Panc1 (cell line): ENCODE measurements at regions of chr2 and their contacts with region 1.

Region 1: GRCh38 chr2:30711646-30712085 is 95.6 kb downstream of the CAPN13 start:
- DNase-seq: peak; percentile 86
- ATAC-seq: peak; percentile 73
- H3K4me3 ChIP-seq: no peak overlapping the region
- H3K27ac ChIP-seq: no peak overlapping the region
- H3K4me1 ChIP-seq: no peaks in the 10 kb centered on the region
- H3K27me3 ChIP-seq: no peaks in the 10 kb centered on the region
- CTCF ChIP-seq: peak; percentile 99

Region 2: DNA sequence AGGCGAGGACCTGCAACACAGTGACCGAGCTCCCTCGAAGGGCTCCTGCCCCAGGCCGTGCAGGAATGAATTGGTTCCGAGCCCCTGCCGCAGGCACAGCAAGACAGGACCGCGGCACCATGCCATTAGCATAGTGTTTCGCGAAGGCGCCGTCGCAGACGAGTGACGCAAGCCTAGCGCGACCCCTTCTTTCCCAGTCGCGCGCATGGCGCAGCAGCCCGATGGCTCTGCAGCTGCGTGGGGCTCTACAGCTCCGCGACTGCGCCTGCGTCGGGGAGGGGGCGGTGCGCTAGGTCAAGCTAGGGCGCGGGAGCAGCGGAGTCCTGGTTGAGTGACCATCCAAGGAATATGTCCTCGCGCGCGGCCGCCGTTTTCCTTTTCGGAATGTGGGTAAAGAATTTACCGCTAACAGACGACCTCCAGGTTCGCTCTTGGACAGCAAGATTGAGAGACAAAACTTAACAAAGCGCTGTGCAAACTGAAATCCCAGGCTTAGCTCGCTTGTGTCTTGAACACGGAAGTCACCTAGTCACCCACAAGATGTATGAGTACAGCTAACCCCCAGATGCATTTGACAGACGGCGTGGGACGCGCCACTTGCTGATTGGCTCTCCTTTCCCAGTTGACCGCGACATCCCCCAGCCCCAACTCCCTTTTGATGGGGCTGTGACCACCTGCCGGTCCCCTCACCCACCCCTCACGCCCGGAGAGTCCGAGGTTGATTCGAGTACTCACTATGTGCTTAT is 1841.3 kb before region 1 on chr2 and contains the start of gene TRMT61B:
- CTCF ChIA-PET with region 1: no interaction called
- POLR2A ChIA-PET with region 1: no interaction called
- in situ Hi-C with region 1: no loop called
- intact Hi-C with region 1: no loop called
- DNase-seq: peak; percentile 90
- ATAC-seq: peak; percentile 99
- H3K4me3 ChIP-seq: peak within 1 kb of the TSS; percentile 85 to 95
- H3K27ac ChIP-seq: peak within 1 kb of the TSS; percentile 89
- H3K4me1 ChIP-seq: peaks cover 10% of the 10 kb centered on the region; the same call in 1 of the 2 replicates
- H3K27me3 ChIP-seq: peaks cover 2% of the 10 kb centered on the region; the same call in 1 of the 2 replicates
- CTCF ChIP-seq: no peak
- total RNA-seq, gene TRMT61B: 14.3 TPM

Region 3: DNA sequence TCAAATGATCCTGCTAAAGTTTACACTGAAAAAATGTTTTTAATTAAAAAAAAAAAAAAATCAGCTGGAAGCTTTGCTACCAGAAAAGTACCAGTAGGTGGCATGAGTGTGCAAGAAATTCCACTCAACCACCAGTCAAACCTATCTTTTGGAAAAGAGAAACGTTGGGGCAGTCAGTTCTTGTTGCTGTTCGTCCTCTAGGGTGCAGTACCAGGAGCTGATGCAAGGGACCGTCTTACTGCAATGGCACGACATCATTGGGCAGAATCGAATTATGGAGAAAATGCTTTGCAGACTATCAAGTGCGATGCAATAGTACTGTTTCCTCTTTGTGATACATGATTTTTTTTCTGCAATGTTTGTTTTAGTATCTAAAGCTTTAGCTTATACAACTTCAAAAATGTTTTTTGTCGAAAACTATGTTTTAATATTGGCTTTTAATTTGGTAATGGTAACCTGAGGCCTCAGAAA is 546.6 kb before region 1 on chr2:
- CTCF ChIA-PET with region 1: interaction called, 47 read pairs
- POLR2A ChIA-PET with region 1: interaction called, 3 read pairs
- in situ Hi-C with region 1: no loop called
- intact Hi-C with region 1: loop called (anchors 1 kb)
- DNase-seq: peak; percentile 69
- ATAC-seq: peak; percentile 99
- H3K4me3 ChIP-seq: no peak overlapping the region
- H3K27ac ChIP-seq: no peak overlapping the region
- H3K4me1 ChIP-seq: no peaks in the 10 kb centered on the region
- H3K27me3 ChIP-seq: no peaks in the 10 kb centered on the region
- CTCF ChIP-seq: peak; percentile 92

Region 4: DNA sequence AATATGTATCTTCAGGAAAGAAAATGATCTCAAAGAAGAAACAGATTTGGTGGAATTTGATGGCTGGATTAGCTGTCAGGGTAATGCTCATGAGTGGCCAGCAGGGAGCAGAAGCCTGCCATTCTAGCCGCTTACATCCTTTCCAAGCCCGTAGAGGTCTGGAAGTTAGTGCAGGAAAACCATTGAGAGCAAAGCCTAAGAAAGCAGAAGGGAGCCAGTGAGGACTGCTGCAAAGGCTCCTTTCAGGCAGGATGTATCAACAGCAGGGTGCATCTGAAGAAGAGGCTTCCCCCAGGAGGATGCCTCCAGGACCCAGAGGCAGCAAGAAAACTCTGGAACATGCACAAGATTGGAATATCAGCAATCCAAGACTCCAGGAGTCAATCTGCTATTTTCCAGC is 503.2 kb before region 1 on chr2:
- CTCF ChIA-PET with region 1: interaction called, 12 read pairs
- POLR2A ChIA-PET with region 1: no interaction called
- in situ Hi-C with region 1: no loop called
- intact Hi-C with region 1: loop called (anchors 1 kb)
- DNase-seq: peak; percentile 51
- ATAC-seq: peak; percentile 97
- H3K4me3 ChIP-seq: no peak overlapping the region
- H3K27ac ChIP-seq: no peak overlapping the region
- H3K4me1 ChIP-seq: no peaks in the 10 kb centered on the region
- H3K27me3 ChIP-seq: no peaks in the 10 kb centered on the region; the same call in 1 of the 2 replicates
- CTCF ChIP-seq: peak; percentile 88

Region 5: DNA sequence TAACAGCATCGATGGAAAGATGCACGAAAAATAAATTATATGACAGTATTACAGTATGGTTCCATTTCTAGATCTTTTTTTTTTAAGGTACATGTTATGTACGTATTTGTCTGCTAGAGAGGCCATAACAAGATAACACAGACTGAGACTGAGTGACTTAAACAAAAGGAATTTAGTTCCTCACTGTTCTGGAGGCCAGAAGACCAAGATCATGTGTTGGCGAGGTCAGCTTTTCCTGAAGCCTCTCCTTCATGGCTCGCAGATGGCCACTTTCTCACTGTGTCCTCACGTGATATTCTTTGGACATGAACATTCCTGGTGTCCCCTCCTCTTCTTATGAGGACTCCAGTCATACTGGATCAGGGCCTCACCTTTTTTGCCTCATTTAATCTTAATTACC is 81.8 kb before region 1 on chr2:
- CTCF ChIA-PET with region 1: no interaction called
- POLR2A ChIA-PET with region 1: no interaction called
- in situ Hi-C with region 1: no loop called
- intact Hi-C with region 1: no loop called
- DNase-seq: no peak
- ATAC-seq: no peak
- H3K4me3 ChIP-seq: no peak overlapping the region
- H3K27ac ChIP-seq: no peak overlapping the region
- H3K4me1 ChIP-seq: no peaks in the 10 kb centered on the region
- H3K27me3 ChIP-seq: no peaks in the 10 kb centered on the region
- CTCF ChIP-seq: no peak

Region 6: GRCh38 chr2:30736461-30737325 is 25.0 kb after region 1 on chr2:
- CTCF ChIA-PET with region 1: interaction called, 11 read pairs
- POLR2A ChIA-PET with region 1: no interaction called
- in situ Hi-C with region 1: no loop called
- intact Hi-C with region 1: no loop called
- DNase-seq: no peak
- ATAC-seq: no peak
- H3K4me3 ChIP-seq: no peak overlapping the region
- H3K27ac ChIP-seq: no peak overlapping the region
- H3K4me1 ChIP-seq: no peaks in the 10 kb centered on the region
- H3K27me3 ChIP-seq: peaks cover 2% of the 10 kb centered on the region; the same call in 1 of the 2 replicates
- CTCF ChIP-seq: no peak

Region 7: DNA sequence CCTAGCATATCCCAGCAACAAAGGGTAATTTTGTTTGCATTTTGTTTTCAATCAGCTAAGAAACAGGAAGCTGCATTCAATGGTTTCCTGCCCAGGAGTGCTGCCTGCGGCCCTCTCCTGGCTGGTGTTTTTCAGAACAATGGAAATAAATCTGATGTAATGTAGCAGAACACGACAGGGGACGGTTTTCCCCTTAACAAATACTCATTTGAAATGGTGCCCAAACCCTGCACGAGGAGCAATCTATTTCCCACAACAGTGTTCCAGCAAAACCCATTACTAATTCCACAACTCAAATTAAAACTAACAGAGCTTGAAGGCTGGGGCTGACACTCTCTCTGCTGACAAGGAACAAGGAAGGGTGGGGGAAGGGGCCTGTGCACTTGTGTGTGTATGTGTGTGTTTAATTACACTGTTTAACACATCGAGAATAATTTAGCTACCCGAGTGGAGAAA is 86.9 kb after region 1 on chr2:
- CTCF ChIA-PET with region 1: no interaction called
- POLR2A ChIA-PET with region 1: no interaction called
- in situ Hi-C with region 1: no loop called
- intact Hi-C with region 1: no loop called
- DNase-seq: no peak
- ATAC-seq: no peak
- H3K4me3 ChIP-seq: no peak overlapping the region
- H3K27ac ChIP-seq: no peak overlapping the region
- H3K4me1 ChIP-seq: no peaks in the 10 kb centered on the region
- H3K27me3 ChIP-seq: peaks cover 7% of the 10 kb centered on the region
- CTCF ChIP-seq: no peak

Region 8: DNA sequence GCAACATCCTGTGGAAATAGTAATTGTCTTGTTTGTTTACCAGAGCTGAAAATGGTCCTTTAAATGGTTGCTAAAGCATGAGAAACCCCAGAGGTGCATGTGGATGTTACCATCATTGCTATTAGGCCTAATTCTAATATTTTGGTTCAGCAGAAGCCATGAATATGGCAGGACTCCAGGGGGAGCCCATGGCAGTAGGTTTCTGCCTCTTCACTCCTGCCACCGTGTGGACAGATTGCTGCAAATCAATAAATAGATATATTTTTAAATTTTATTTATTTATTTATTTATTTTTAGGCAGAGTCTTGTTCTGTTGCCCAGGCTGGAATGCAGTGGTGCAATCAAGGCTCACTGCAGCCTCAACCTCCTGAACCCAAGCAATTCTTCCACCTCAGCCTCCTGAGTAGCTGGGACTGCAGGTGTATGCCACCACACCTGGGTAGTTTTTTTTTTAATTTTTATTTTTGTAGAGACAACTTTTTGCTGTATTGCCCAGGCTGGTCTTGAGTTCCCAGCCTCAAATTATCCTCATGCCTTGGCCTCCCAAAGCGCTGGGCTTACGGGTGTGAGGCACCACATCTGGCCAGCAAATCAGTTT is 150.5 kb after region 1 on chr2:
- CTCF ChIA-PET with region 1: interaction called, 7 read pairs
- POLR2A ChIA-PET with region 1: no interaction called
- in situ Hi-C with region 1: no loop called
- intact Hi-C with region 1: loop called (anchors 5 kb)
- DNase-seq: peak; percentile 42
- ATAC-seq: no peak
- H3K4me3 ChIP-seq: no peak overlapping the region
- H3K27ac ChIP-seq: no peak overlapping the region
- H3K4me1 ChIP-seq: no peaks in the 10 kb centered on the region
- H3K27me3 ChIP-seq: no peaks in the 10 kb centered on the region
- CTCF ChIP-seq: peak; percentile 79

Region 9: DNA sequence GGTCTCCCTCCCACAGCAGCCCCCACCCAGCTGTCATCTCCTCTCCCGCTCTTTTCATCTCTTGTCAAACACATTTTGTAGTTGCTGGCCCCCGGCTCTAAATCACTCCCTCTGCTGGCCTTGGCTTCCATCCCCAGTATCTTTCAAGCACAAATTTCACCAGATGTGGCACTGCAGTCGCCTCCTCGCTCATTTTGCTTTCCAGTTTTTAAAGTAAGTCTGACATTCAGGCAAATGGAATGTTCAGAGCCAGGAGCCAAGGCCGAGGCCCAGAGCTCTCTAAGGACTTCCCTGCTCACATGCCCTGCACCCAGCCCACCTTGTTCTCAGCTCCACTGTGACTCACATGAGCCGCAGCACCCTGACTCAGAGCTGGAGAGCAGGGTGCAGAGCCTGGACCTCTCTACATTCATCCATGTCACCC is 268.2 kb after region 1 on chr2:
- CTCF ChIA-PET with region 1: no interaction called
- POLR2A ChIA-PET with region 1: no interaction called
- in situ Hi-C with region 1: no loop called
- intact Hi-C with region 1: no loop called
- DNase-seq: no peak
- ATAC-seq: no peak
- H3K4me3 ChIP-seq: no peak overlapping the region
- H3K27ac ChIP-seq: no peak overlapping the region
- H3K4me1 ChIP-seq: no peaks in the 10 kb centered on the region
- H3K27me3 ChIP-seq: no peaks in the 10 kb centered on the region; the same call in 1 of the 2 replicates
- CTCF ChIP-seq: peak; percentile 26; the same call in 1 of the 2 replicates

Region 10: GRCh38 chr2:31170071-31170698 is 458.5 kb after region 1 on chr2:
- CTCF ChIA-PET with region 1: interaction called, 14 read pairs
- POLR2A ChIA-PET with region 1: no interaction called
- in situ Hi-C with region 1: no loop called
- intact Hi-C with region 1: loop called (anchors 1 kb)
- DNase-seq: peak; percentile 60
- ATAC-seq: peak; percentile 94
- H3K4me3 ChIP-seq: no peak overlapping the region
- H3K27ac ChIP-seq: no peak overlapping the region
- H3K4me1 ChIP-seq: no peaks in the 10 kb centered on the region
- H3K27me3 ChIP-seq: peaks cover 2% of the 10 kb centered on the region
- CTCF ChIP-seq: peak; percentile 93

Region 11: DNA sequence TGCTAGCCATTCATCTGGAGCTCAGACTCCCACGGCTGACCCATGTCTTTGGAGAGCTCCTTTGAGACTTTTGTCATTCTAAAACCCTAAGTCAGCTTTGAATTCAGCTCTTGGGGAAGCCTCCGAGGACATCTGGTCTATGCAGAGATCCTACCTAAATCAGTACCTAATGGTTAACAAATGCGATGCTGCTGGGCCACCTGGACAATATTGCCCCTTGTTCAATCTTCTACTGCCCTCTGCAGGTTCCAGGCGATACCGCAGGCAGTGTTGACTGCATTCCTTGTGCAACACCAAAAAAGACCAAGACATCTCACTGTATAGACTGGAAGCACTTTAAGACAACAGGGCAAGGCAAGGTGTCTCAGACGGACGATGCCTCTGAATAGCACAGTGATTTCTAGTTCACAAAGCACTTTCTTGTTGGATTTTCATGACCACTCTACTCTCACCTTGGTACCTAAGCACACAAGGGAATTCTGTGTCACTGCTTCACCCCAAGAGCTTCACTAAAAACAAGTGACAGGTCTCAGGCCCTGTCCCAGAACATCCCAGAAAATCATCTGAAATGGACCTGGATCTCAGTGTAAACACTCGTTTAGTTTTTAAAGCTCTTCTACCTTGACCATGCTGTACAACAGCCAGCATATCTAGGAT is 622.0 kb after region 1 on chr2:
- CTCF ChIA-PET with region 1: no interaction called
- POLR2A ChIA-PET with region 1: no interaction called
- in situ Hi-C with region 1: no loop called
- intact Hi-C with region 1: loop called (anchors 2 kb)
- DNase-seq: peak; percentile 66
- ATAC-seq: peak; percentile 93
- H3K4me3 ChIP-seq: no peak overlapping the region
- H3K27ac ChIP-seq: no peak overlapping the region
- H3K4me1 ChIP-seq: no peaks in the 10 kb centered on the region
- H3K27me3 ChIP-seq: no peaks in the 10 kb centered on the region; the same call in none of the 2 replicates
- CTCF ChIP-seq: peak; percentile 91